ENCODE measurements at regions of chr1 and their contacts with region 1.

Region 1: GRCh38 chr1:37453647-37454046 is 20.7 kb upstream of the ZC3H12A start:
- DNase-seq: no peak
- H3K4me3 ChIP-seq: no peak overlapping the region
- H3K27ac ChIP-seq: no peak overlapping the region
- H3K4me1 ChIP-seq: peaks cover 4 to 9% (median 8%) of the 10 kb centered on the region in 4 donors
- H3K27me3 ChIP-seq: peaks cover 0 to 38% (median 14%) of the 10 kb centered on the region in 3 donors
- CTCF ChIP-seq: no peak
- EP300 ChIP-seq: no peak
- POLR2A ChIP-seq: no peak

Region 2: GRCh38 chr1:37323486-37324377 is 129.9 kb before region 1 on chr1:
- intact Hi-C with region 1: no loop called
- DNase-seq: no peak
- H3K4me3 ChIP-seq: no peak overlapping the region
- H3K27ac ChIP-seq: no peak overlapping the region
- H3K4me1 ChIP-seq: no peaks in the 10 kb centered on the region
- H3K27me3 ChIP-seq: peaks cover 0 to 65% (median 13%) of the 10 kb centered on the region in 3 donors
- CTCF ChIP-seq: peak in 2 of 4 experiments; percentile 19 to 26
- EP300 ChIP-seq: no peak
- POLR2A ChIP-seq: no peak

Region 3: DNA sequence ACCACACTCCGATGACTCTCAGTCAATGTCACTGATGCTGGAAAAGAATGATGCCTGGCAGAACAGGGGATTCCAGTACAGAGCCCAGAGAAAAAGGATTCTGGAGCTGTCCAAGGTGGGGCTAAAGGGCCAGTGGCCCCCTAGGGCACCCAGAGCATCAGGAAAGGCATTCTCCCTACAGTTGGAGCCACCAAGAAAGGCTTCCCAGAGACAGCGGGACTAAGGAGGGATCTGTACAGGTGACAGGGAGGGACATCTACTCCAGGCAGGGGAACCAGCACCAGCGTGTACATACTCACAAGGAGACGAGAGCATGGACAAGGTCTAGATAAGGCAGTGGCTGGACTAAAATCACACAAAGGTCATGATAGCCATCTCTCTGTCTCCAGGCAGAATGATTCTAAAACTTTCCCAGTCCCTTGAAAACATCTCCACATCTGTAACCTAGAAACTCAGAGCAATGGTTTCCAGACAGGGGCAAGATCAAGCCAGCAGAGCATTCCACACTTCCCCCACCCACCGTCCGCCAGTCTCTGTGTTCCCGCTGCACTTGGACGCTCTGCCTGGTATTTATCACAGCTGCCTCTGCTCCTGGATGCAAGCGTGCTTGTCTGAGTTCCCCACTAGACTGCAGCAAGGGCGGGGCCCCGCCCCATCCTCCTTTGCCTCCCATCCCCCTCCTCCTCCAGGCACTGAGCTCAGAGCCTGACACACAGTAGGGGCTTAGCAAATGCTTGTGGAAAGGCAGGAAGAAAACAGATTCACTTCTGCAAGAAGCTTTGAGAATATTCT is 90.9 kb before region 1 on chr1:
- intact Hi-C with region 1: no loop called
- DNase-seq: no peak
- H3K4me3 ChIP-seq: no peak overlapping the region
- H3K27ac ChIP-seq: no peak overlapping the region
- H3K4me1 ChIP-seq: peaks cover 0 to 16% (median 6%) of the 10 kb centered on the region in 4 donors
- H3K27me3 ChIP-seq: peaks cover 0 to 7% (median 5%) of the 10 kb centered on the region in 3 donors
- CTCF ChIP-seq: no peak
- EP300 ChIP-seq: no peak
- POLR2A ChIP-seq: no peak

Region 4: GRCh38 chr1:37474046-37474759 is 20.6 kb after region 1 on chr1 and contains the start of gene ZC3H12A:
- intact Hi-C with region 1: loop called (anchors 2 kb)
- DNase-seq: peak; percentile 96
- H3K4me3 ChIP-seq: peak within 1 kb of the TSS; percentile 77 to 93 (median 81)
- H3K27ac ChIP-seq: peak within 1 kb of the TSS; percentile 94 to 99 (median 96)
- H3K4me1 ChIP-seq: peaks cover 0 to 81% (median 77%) of the 10 kb centered on the region in 4 donors
- H3K27me3 ChIP-seq: no peaks in the 10 kb centered on the region
- CTCF ChIP-seq: no peak
- EP300 ChIP-seq: no peak
- POLR2A ChIP-seq: peak; percentile 4 to 32
- total RNA-seq, gene ZC3H12A: 7.4 to 25.8 (median 8.5) TPM

Region 5: GRCh38 chr1:37486680-37487618 is 33.3 kb after region 1 on chr1:
- intact Hi-C with region 1: loop called (anchors 1 kb)
- DNase-seq: peak; percentile 90
- H3K4me3 ChIP-seq: no peak overlapping the region
- H3K27ac ChIP-seq: peak overlapping the region; percentile 72 to 79 (median 76)
- H3K4me1 ChIP-seq: peaks cover 0 to 34% (median 28%) of the 10 kb centered on the region in 4 donors
- H3K27me3 ChIP-seq: no peaks in the 10 kb centered on the region
- CTCF ChIP-seq: peak; percentile 95 to 99 (median 98)
- EP300 ChIP-seq: no peak
- POLR2A ChIP-seq: no peak

Region 6: GRCh38 chr1:37514350-37515184 is 60.9 kb after region 1 on chr1 and contains the start of gene MEAF6:
- intact Hi-C with region 1: loop called (anchors 2 kb)
- DNase-seq: peak; percentile 90
- H3K4me3 ChIP-seq: peak within 1 kb of the TSS; percentile 50 to 99 (median 84)
- H3K27ac ChIP-seq: peak within 1 kb of the TSS; percentile 92 to 98 (median 96)
- H3K4me1 ChIP-seq: peaks cover 0 to 32% (median 20%) of the 10 kb centered on the region in 4 donors
- H3K27me3 ChIP-seq: no peaks in the 10 kb centered on the region
- CTCF ChIP-seq: peak in 2 of 4 experiments; percentile 16 to 82
- EP300 ChIP-seq: no peak
- POLR2A ChIP-seq: peak; percentile 76 to 77
- total RNA-seq, gene MEAF6: 64.0 to 84.5 (median 79.9) TPM

Region 7: GRCh38 chr1:37682334-37682987 is 228.8 kb after region 1 on chr1:
- intact Hi-C with region 1: loop called (anchors 2 kb)
- DNase-seq: peak; percentile 81
- H3K4me3 ChIP-seq: no peak overlapping the region
- H3K27ac ChIP-seq: no peak overlapping the region
- H3K4me1 ChIP-seq: peaks cover 0 to 8% (median 1%) of the 10 kb centered on the region in 4 donors
- H3K27me3 ChIP-seq: no peaks in the 10 kb centered on the region
- CTCF ChIP-seq: peak; percentile 56 to 82 (median 80)
- EP300 ChIP-seq: no peak
- POLR2A ChIP-seq: no peak